ENCODE measurements at regions of chr9 and their contacts with region 1.

Region 1: DNA sequence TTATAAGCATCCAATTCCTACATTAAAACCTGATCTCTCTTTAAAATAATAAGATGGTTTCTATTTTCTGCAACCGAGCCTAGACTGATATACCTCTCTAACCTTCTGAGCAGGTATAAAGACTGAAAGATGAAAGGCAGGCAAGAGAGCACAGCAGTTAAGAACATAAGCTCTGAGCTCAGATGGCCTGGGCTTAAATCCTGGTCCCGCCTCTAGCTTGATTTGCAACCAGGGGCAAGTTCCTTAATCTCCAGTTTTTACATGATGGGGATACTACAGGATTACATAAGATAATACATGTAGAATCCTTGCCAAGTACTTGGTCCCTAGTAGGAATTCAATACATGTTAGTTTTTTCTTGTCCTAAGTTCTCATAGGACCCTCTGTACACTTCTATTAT is 33.9 kb downstream of the SLC24A2 start:
- DNase-seq: no peak

Region 2: DNA sequence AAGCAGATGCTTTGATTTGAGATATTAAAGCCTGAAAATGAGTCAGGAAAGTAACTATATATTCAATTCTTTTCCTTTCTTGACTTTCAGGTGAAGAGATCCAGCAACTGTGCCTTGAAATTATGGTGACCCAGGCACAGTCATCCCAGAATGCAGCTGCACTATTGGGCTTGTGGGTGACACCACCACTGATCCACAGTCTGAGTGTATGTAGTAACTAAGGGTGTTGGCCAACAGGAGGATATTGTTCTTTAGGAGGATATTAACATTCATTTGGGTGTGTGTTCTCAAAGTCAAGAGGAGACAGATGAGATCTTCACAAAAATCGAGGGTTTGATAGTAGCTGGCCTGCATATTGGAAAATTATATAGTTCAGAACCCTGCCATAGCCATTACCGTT is 1223.3 kb after region 1 on chr9:
- intact Hi-C with region 1: loop called in 1 of 2 experiments (anchors 5 kb)
- DNase-seq: no peak